Activated B cell treated with CpG ODN at 0.5 μM for 24 hours (primary cell): ENCODE measurements at regions of chr18 and their contacts with region 1.

Region 1: GRCh38 chr18:46173393-46174341 is 69.5 kb downstream of the HAUS1 start:
- DNase-seq: peak; percentile 91
- ATAC-seq: peak; percentile 88
- H3K4me3 Mint-ChIP-seq: peak overlapping the region; percentile 97
- H3K27ac Mint-ChIP-seq: peak overlapping the region; percentile 99
- H3K4me1 Mint-ChIP-seq: peaks cover 44% of the 10 kb centered on the region
- H3K27me3 Mint-ChIP-seq: no peaks in the 10 kb centered on the region
- CTCF ChIP-seq: peak; percentile 52

Region 2: GRCh38 chr18:45920367-45920766 is 253.3 kb before region 1 on chr18:
- CTCF ChIA-PET with region 1: no interaction called
- POLR2A ChIA-PET with region 1: no interaction called
- intact Hi-C with region 1: no loop called
- DNase-seq: no peak
- ATAC-seq: peak; percentile 54
- H3K4me3 Mint-ChIP-seq: no peak overlapping the region
- H3K27ac Mint-ChIP-seq: no peak overlapping the region
- H3K4me1 Mint-ChIP-seq: peaks cover 19% of the 10 kb centered on the region
- H3K27me3 Mint-ChIP-seq: no peaks in the 10 kb centered on the region
- CTCF ChIP-seq: no peak

Region 3: DNA sequence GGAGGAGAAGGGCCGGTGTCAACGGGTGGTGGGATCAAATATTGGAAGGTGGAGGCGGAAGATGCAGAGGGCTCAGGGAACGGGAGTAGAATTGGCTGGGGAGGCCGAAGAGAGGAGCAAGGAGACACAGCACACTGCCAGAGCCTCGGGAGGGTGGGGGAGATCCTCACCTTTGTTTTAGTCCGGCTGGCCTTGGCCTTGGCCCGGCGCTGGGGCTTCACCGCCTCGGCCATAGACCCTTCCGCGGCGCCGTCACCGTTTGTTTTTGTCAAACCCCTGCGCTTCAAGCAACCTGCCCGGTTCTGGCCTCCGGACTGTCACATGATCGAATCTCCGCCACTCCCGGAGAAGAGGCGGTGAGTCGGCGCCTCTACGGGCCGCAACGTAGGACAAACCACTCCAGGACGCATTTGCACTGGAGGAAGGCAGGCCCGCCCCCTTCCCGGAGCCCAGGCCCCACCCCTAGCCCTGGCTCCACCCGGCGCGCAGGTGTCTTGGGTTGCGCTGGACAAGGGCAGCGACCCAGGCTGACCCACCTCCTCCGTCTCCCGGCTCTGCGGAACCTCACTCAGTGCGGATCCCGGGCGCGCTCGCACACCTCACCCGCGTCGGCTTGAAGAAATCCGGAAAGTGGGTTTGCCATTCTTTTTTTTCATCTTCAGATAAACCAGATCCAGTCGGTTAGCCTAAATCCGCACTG is 206.5 kb before region 1 on chr18 and contains the start of gene EPG5:
- CTCF ChIA-PET with region 1: no interaction called
- POLR2A ChIA-PET with region 1: no interaction called
- intact Hi-C with region 1: loop called (anchors 1 kb)
- DNase-seq: peak; percentile 88
- ATAC-seq: peak; percentile 100
- H3K4me3 Mint-ChIP-seq: peak within 1 kb of the TSS; percentile 98
- H3K27ac Mint-ChIP-seq: peak within 1 kb of the TSS; percentile 87
- H3K4me1 Mint-ChIP-seq: peaks cover 42% of the 10 kb centered on the region
- H3K27me3 Mint-ChIP-seq: no peaks in the 10 kb centered on the region
- CTCF ChIP-seq: no peak
- total RNA-seq, gene EPG5: 34.2 and 38.3 TPM in 2 replicates

Region 4: GRCh38 chr18:46019941-46020340 is 153.7 kb before region 1 on chr18:
- CTCF ChIA-PET with region 1: no interaction called
- POLR2A ChIA-PET with region 1: no interaction called
- intact Hi-C with region 1: no loop called
- DNase-seq: no peak
- ATAC-seq: no peak
- H3K4me3 Mint-ChIP-seq: no peak overlapping the region
- H3K27ac Mint-ChIP-seq: no peak overlapping the region
- H3K4me1 Mint-ChIP-seq: no peaks in the 10 kb centered on the region
- H3K27me3 Mint-ChIP-seq: peaks cover 4% of the 10 kb centered on the region
- CTCF ChIP-seq: no peak

Region 5: GRCh38 chr18:46148810-46149209 is 24.9 kb before region 1 on chr18:
- CTCF ChIA-PET with region 1: interaction called, 5 read pairs
- POLR2A ChIA-PET with region 1: no interaction called
- intact Hi-C with region 1: loop called (anchors 1 kb)
- DNase-seq: no peak
- ATAC-seq: no peak
- H3K4me3 Mint-ChIP-seq: no peak overlapping the region
- H3K27ac Mint-ChIP-seq: no peak overlapping the region
- H3K4me1 Mint-ChIP-seq: no peaks in the 10 kb centered on the region
- H3K27me3 Mint-ChIP-seq: no peaks in the 10 kb centered on the region
- CTCF ChIP-seq: peak; percentile 59

Region 6: GRCh38 chr18:46190667-46191066 is 17.0 kb after region 1 on chr18:
- CTCF ChIA-PET with region 1: interaction called, 3 read pairs
- POLR2A ChIA-PET with region 1: interaction called, 8 read pairs
- intact Hi-C with region 1: loop called (anchors 2 kb)
- DNase-seq: no peak
- ATAC-seq: no peak
- H3K4me3 Mint-ChIP-seq: no peak overlapping the region
- H3K27ac Mint-ChIP-seq: peak overlapping the region; percentile 12
- H3K4me1 Mint-ChIP-seq: peaks cover 26% of the 10 kb centered on the region
- H3K27me3 Mint-ChIP-seq: no peaks in the 10 kb centered on the region
- CTCF ChIP-seq: no peak

Region 7: DNA sequence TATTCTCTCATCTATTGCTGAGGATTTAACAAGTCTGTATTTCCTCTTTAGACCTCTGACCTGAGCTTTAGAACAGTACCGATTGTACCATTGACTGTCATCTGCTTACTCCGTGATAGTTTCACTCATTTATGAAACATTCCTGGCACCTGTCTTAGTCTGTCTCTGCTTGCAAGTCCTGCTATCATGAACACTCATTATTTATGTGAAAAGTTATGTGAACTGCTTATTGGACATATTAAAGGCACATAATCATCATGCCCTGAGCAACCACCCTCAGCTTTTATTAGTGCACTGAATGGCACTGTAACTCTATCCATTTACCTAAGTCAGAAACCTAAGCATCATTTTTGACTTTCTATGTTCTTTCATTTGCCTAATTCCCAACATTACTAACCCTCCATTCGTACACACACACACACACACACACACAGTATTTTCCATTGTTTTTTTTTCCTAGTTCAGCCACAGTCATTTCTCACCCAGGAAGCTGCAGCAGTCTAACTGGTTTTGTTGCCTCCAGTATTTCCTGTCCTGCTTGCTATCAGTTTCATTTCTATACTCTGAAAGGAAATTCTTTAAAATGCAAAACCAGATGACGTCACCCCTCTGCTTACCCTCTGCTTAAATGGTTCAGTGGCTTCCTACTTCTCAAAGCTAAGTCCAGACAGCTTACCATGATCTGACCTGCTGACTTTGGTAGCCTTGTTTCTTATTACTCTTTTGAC is 76.6 kb after region 1 on chr18:
- CTCF ChIA-PET with region 1: interaction called, 18 read pairs
- POLR2A ChIA-PET with region 1: interaction called, 16 read pairs
- intact Hi-C with region 1: loop called (anchors 1 kb)
- DNase-seq: no peak
- ATAC-seq: peak; percentile 94
- H3K4me3 Mint-ChIP-seq: peak overlapping the region; percentile 78
- H3K27ac Mint-ChIP-seq: peak overlapping the region; percentile 94
- H3K4me1 Mint-ChIP-seq: peaks cover 46% of the 10 kb centered on the region
- H3K27me3 Mint-ChIP-seq: no peaks in the 10 kb centered on the region
- CTCF ChIP-seq: no peak

Region 8: GRCh38 chr18:46411867-46412690 is 238.4 kb after region 1 on chr18:
- CTCF ChIA-PET with region 1: no interaction called
- POLR2A ChIA-PET with region 1: no interaction called
- intact Hi-C with region 1: no loop called
- DNase-seq: no peak
- ATAC-seq: no peak
- H3K4me3 Mint-ChIP-seq: no peak overlapping the region
- H3K27ac Mint-ChIP-seq: no peak overlapping the region
- H3K4me1 Mint-ChIP-seq: no peaks in the 10 kb centered on the region
- H3K27me3 Mint-ChIP-seq: peaks cover 8% of the 10 kb centered on the region
- CTCF ChIP-seq: no peak

Region 9: DNA sequence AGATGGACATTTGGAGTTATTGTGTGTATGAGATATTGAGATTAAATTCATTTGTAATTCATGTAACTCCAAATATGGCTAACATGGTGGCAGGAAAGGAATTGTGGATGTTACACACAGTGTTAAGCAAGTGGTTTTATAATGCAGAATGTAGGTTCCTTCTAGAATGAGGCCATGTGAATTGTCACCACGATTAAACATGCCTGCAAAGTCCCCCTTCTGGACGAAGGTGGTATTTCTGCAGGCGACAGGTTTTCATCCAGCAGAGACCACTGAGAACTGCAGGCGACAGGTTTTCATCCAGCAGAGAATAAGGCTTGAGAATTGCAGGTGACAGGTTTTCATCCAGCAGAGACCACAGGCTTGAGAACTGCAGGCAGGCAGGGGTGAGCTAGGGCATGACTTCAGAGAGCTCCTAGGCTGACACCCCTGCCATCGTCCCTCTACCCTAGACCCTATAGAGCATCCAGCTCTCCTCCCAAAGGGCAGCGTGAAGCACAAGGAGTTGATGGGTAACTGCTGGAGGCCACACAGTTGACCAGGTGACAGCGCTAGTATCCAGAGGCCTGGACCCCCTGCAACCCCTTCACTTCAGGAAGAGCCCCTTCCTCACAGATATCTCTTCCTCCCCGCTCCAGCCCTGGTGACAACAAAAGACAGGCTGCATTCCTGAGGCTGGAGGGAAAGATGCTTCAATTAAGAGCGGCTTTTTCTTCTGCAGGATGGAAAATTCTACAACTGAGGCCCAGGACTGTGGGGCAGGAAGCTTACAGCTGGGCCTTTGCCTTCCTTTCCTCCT is 307.6 kb after region 1 on chr18:
- CTCF ChIA-PET with region 1: interaction called, 12 read pairs
- POLR2A ChIA-PET with region 1: no interaction called
- intact Hi-C with region 1: loop called (anchors 1 kb)
- DNase-seq: no peak
- ATAC-seq: peak; percentile 45
- H3K4me3 Mint-ChIP-seq: no peak overlapping the region
- H3K27ac Mint-ChIP-seq: no peak overlapping the region
- H3K4me1 Mint-ChIP-seq: no peaks in the 10 kb centered on the region
- H3K27me3 Mint-ChIP-seq: peaks cover 13% of the 10 kb centered on the region
- CTCF ChIP-seq: no peak

Region 10: DNA sequence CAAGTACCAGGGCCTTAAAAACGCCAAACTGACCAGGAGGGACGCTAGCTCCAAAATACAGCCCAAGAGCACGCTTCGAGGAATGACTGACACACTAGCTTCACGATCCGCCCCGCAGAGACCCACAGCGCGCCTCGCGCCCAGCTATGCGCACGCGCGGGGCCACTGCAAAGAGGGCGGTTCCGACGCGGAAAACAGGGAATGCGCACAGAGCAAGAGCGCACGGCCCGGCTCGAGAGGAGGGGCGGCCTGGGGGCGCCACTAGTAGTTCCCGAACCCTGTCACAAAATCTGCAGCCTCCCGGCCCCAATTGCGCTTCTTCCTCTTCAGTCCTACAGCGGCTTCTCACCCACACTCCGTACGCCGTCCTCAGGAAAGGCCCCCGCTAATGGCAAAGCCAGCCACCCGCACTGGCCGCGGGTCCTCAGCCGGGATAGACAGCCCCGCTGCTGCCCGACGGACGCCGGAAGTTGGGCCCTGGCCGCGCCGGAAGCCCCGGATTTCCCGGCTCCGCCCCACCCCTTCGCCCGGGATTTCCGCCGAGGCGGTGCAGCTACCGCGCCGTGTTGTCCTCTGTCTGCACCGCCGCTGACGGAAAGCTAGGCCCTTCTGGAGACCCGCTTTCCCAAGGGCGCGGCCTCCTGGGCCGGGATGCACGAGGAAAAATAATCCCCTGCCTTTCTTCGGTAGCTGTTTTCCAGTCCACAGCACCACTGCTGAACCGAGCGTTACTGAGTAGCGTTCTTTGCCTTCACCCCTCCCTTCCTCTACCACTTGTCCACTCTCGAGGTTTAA is 976.6 kb after region 1 on chr18 and contains the start of gene HDHD2:
- CTCF ChIA-PET with region 1: no interaction called
- POLR2A ChIA-PET with region 1: no interaction called
- intact Hi-C with region 1: loop called (anchors 5 kb)
- DNase-seq: peak; percentile 75
- ATAC-seq: peak; percentile 83
- H3K4me3 Mint-ChIP-seq: peak within 1 kb of the TSS; percentile 92
- H3K27ac Mint-ChIP-seq: peak within 1 kb of the TSS; percentile 84
- H3K4me1 Mint-ChIP-seq: peaks cover 30% of the 10 kb centered on the region
- H3K27me3 Mint-ChIP-seq: no peaks in the 10 kb centered on the region
- CTCF ChIP-seq: no peak
- total RNA-seq, gene HDHD2: 36.6 and 38.8 TPM in 2 replicates